Activated CD4-positive, alpha-beta T cell treated with anti-CD3 and anti-CD28 coated beads for 36 hours (primary cell): ENCODE measurements at regions of chr2 and their contacts with region 1.

Region 1: DNA sequence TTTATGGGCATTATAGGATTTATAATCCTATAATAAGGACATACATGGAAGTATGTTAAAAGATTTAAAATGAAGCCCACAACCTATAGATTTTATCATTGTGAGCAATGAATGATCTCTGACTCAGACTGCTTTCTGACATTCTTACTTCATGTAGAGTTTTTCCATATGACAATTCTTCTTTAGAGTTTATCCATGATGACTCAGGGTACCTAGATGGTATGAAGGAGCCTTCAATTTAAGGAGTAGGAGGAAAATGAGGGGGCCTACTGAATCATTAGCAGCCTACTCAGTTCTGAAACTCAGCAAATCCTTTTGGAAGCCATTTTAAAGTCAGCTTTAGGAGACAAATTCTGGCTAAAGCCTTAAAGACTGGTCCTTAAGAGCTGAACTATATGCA is 10.4 kb downstream of the PELI1 start:
- DNase-seq: no peak
- ATAC-seq: peak; percentile 71
- H3K4me3 Mint-ChIP-seq: peak overlapping the region; percentile 11
- H3K27ac Mint-ChIP-seq: peak overlapping the region; percentile 72
- H3K4me1 Mint-ChIP-seq: peaks cover 87% of the 10 kb centered on the region
- H3K27me3 Mint-ChIP-seq: no peaks in the 10 kb centered on the region

Region 2: DNA sequence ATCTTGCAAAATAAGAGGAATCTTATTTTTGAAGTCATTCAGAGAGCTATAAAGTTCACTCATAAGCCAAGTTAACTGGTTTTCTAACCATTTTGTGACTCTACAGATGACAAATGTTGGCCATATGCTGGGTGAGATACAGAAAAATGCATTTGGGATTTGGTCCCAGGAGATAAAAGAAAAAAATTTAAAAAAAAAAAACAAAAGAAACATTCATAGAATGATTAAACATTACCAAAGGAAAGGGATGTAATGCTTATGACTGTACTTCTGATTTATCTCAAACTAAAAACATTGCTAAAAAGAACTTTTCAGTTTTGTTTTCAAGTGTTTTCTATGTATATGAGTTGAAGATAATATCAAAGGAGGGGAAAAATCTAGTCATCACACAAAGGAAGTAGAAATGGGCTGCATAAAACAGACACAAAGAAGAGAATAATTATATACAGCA is 32.7 kb before region 1 on chr2:
- CTCF ChIA-PET with region 1: interaction called, 20 read pairs
- POLR2A ChIA-PET with region 1: interaction called, 8 read pairs
- intact Hi-C with region 1: loop called (anchors 1 kb)
- DNase-seq: no peak
- ATAC-seq: peak; percentile 86
- H3K4me3 Mint-ChIP-seq: peak overlapping the region; percentile 3
- H3K27ac Mint-ChIP-seq: peak overlapping the region; percentile 51
- H3K4me1 Mint-ChIP-seq: peaks cover 54% of the 10 kb centered on the region
- H3K27me3 Mint-ChIP-seq: no peaks in the 10 kb centered on the region

Region 3: GRCh38 chr2:64114063-64114911 is 19.5 kb before region 1 on chr2:
- CTCF ChIA-PET with region 1: interaction called, 9 read pairs
- POLR2A ChIA-PET with region 1: no interaction called
- intact Hi-C with region 1: loop called (anchors 1 kb)
- DNase-seq: no peak
- ATAC-seq: peak; percentile 85
- H3K4me3 Mint-ChIP-seq: peak overlapping the region; percentile 24
- H3K27ac Mint-ChIP-seq: peak overlapping the region; percentile 64
- H3K4me1 Mint-ChIP-seq: peaks cover 74% of the 10 kb centered on the region
- H3K27me3 Mint-ChIP-seq: no peaks in the 10 kb centered on the region

Region 4: GRCh38 chr2:64120928-64121327 is 12.9 kb before region 1 on chr2:
- CTCF ChIA-PET with region 1: interaction called, 13 read pairs
- POLR2A ChIA-PET with region 1: interaction called, 3 read pairs
- intact Hi-C with region 1: no loop called
- DNase-seq: no peak
- ATAC-seq: no peak
- H3K4me3 Mint-ChIP-seq: no peak overlapping the region
- H3K27ac Mint-ChIP-seq: no peak overlapping the region
- H3K4me1 Mint-ChIP-seq: peaks cover 58% of the 10 kb centered on the region
- H3K27me3 Mint-ChIP-seq: no peaks in the 10 kb centered on the region

Region 5: DNA sequence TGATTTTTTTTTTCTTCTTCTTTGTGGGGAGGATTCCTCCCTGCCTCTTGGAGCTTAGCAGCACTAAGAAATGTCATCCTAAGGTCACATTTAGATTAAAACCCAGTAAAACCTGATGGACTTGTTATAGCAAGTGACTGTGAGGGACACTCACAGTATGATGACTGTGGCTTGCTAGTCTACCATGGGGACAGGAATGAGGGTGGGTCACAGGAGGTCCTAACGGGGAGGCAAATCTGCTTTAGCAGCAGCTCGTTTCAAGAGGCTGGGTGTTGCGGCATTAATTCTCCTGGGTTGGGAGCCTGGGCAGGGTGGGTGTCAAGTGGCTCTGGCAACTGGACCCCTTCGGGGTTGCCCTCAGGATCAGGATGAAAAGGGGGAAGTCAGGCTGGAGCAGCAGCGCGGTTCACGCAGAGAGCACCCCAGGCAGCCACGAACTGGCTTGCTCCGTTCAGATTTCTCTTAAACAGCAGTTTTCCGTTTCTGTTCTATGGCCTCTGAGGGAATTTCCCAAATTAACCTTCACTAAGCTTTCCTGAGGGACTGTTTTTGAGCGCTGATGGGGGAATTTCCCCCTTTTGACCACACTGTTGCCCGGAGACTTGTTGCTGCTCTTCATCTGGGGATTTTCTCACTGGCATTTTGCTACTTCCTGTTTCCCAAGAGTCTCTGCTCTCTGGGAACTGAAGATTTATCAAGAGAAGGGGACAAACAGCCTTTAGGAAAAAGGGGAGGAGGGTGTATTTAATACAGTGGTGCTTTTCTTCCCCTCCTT is 70.2 kb after region 1 on chr2:
- CTCF ChIA-PET with region 1: no interaction called
- POLR2A ChIA-PET with region 1: interaction called, 4 read pairs
- intact Hi-C with region 1: loop called in 1 of 2 experiments (anchors 2 kb)
- DNase-seq: peak; percentile 59
- ATAC-seq: peak; percentile 53
- H3K4me3 Mint-ChIP-seq: peak overlapping the region; percentile 65
- H3K27ac Mint-ChIP-seq: peak overlapping the region; percentile 93
- H3K4me1 Mint-ChIP-seq: peaks cover 72% of the 10 kb centered on the region
- H3K27me3 Mint-ChIP-seq: no peaks in the 10 kb centered on the region